ENCODE measurements at regions of chr5 and their contacts with region 1.

Region 1: DNA sequence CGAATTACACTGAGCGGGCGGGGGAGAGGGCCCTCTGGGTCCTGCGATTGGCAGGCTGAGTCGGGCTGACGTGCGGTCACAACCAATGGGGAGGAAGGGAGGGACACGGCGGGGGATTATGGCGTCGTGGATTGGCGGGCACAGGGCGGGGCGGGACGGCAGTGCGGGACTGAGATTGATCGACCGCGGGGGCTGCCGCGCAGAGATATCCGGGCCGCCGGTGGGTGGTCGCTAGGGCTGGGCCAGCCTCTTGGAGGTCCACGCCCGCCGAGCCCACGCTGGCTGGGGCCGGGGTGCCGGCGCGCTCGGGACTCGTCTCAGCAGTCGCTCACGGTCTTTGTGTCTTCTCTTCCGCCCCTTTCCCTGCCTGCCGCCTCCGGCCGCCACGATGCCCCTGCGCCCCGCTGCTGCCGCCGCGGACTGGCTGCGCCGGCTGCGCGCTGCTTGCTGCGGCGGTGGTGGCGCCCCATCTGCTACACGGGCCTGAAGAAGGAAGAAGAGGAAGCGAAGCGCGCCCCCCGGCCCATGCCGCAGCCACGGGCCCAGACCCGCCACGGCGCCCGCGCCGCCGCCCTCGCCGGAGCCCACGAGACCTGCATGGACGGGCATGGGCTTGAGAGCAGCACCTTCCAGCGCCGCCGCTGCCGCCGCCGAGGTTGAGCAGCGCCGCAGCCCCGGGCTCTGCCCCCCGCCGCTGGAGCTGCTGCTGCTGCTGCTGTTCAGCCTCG is at the start of gene RGMB:
- DNase-seq: peak; percentile 63 to 93 (median 88)
- ATAC-seq: peak; percentile 92
- H3K4me3 ChIP-seq: peak within 1 kb of the TSS; percentile 88
- H3K4me3 Mint-ChIP-seq: peak within 1 kb of the TSS; percentile 89 to 100 (median 98)
- H3K27ac ChIP-seq: peak within 1 kb of the TSS; percentile 61
- H3K27ac Mint-ChIP-seq: peak within 1 kb of the TSS; percentile 75 to 98 (median 95)
- H3K4me1 ChIP-seq: peaks cover 19 to 28% of the 10 kb centered on the region in 2 donors
- H3K4me1 Mint-ChIP-seq: peaks cover 44 to 72% (median 65%) of the 10 kb centered on the region in 7 donors
- H3K27me3 ChIP-seq: peaks cover 0 to 4% of the 10 kb centered on the region in 2 donors
- H3K27me3 Mint-ChIP-seq: peaks cover 0 to 83% (median 7%) of the 10 kb centered on the region in 5 donors
- total RNA-seq, gene RGMB: 0.41 to 22.4 (median 18.7) TPM

Region 2: GRCh38 chr5:96896806-96897205 is 1876.8 kb before region 1 on chr5:
- CTCF ChIA-PET with region 1: no interaction called
- POLR2A ChIA-PET with region 1: no interaction called
- intact Hi-C with region 1: loop called in 1 of 2 experiments (anchors 10 kb)
- DNase-seq: no peak
- ATAC-seq: peak; percentile 73
- H3K4me3 ChIP-seq: peak overlapping the region; percentile 36
- H3K4me3 Mint-ChIP-seq: peak overlapping the region; percentile 67 to 88 (median 79)
- H3K27ac ChIP-seq: peak overlapping the region; percentile 69
- H3K27ac Mint-ChIP-seq: peak overlapping the region; percentile 83 to 98 (median 94)
- H3K4me1 ChIP-seq: peaks cover 6 to 17% of the 10 kb centered on the region in 2 donors
- H3K4me1 Mint-ChIP-seq: peaks cover 26 to 71% (median 68%) of the 10 kb centered on the region in 7 donors
- H3K27me3 ChIP-seq: no peaks in the 10 kb centered on the region
- H3K27me3 Mint-ChIP-seq: no peaks in the 10 kb centered on the region

Region 3: DNA sequence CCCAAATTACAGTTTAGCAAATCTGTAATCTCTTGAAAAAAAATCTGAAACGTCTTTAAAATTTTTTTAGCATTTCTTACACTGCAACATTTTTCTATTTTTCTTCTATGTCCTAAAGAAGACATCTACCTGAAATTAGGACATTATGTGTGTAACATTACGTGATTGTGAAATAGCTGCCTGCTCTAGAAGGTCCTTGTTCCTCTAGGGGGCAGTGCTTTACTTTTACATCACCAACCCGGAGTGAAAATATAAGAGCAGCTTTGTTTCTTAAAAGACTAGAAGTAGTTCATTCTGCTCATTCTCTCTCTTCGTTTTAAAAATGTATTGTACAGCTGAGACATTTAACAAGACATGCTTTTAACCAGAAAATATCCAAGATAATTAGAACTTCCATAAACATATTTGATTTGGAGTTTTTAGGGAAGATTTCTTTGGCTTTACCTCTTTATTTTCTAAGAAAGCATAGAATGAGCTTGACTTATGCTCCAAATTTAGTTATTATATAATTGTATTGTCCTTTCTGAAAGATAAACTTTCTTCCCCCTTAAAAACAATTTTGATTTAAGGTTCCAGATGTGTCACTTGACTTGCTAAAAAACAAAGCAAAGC is 1542.5 kb before region 1 on chr5:
- CTCF ChIA-PET with region 1: no interaction called
- POLR2A ChIA-PET with region 1: no interaction called
- intact Hi-C with region 1: loop called in 1 of 2 experiments (anchors 1 kb)
- DNase-seq: peak in 7 of 9 donors; percentile 19 to 58 (median 43)
- ATAC-seq: peak; percentile 73
- H3K4me3 ChIP-seq: no peak overlapping the region
- H3K4me3 Mint-ChIP-seq: no peak overlapping the region
- H3K27ac ChIP-seq: no peak overlapping the region
- H3K27ac Mint-ChIP-seq: no peak overlapping the region
- H3K4me1 ChIP-seq: no peaks in the 10 kb centered on the region
- H3K4me1 Mint-ChIP-seq: peaks cover 0 to 5% (median 0%) of the 10 kb centered on the region in 7 donors
- H3K27me3 ChIP-seq: no peaks in the 10 kb centered on the region
- H3K27me3 Mint-ChIP-seq: peaks cover 0 to 13% (median 0%) of the 10 kb centered on the region in 5 donors

Region 4: DNA sequence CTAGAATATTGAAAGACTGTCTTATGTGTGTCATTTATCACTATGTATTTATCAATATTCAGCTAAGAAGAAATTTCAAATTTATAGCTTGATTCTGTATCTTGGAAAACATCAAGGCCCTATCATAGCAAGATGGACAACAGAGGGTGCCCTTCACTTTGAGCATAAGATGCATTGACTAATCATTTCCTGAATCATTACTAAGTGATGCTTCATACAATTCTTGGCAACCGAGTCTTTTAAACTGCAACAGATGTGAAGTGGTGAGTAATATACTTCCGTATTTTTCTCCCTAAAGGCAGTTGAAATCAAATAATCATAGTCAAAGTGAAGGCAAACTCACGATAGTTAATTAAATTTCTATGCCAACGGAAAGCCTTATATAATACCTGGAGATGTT is 318.7 kb before region 1 on chr5:
- CTCF ChIA-PET with region 1: interaction called, 3 read pairs
- POLR2A ChIA-PET with region 1: no interaction called
- intact Hi-C with region 1: loop called in 1 of 2 experiments (anchors 5 kb)
- DNase-seq: no peak
- ATAC-seq: no peak
- H3K4me3 ChIP-seq: no peak overlapping the region
- H3K4me3 Mint-ChIP-seq: no peak overlapping the region
- H3K27ac ChIP-seq: no peak overlapping the region
- H3K27ac Mint-ChIP-seq: no peak overlapping the region
- H3K4me1 ChIP-seq: no peaks in the 10 kb centered on the region
- H3K4me1 Mint-ChIP-seq: no peaks in the 10 kb centered on the region
- H3K27me3 ChIP-seq: no peaks in the 10 kb centered on the region
- H3K27me3 Mint-ChIP-seq: peaks cover 0 to 5% (median 0%) of the 10 kb centered on the region in 5 donors

Region 5: DNA sequence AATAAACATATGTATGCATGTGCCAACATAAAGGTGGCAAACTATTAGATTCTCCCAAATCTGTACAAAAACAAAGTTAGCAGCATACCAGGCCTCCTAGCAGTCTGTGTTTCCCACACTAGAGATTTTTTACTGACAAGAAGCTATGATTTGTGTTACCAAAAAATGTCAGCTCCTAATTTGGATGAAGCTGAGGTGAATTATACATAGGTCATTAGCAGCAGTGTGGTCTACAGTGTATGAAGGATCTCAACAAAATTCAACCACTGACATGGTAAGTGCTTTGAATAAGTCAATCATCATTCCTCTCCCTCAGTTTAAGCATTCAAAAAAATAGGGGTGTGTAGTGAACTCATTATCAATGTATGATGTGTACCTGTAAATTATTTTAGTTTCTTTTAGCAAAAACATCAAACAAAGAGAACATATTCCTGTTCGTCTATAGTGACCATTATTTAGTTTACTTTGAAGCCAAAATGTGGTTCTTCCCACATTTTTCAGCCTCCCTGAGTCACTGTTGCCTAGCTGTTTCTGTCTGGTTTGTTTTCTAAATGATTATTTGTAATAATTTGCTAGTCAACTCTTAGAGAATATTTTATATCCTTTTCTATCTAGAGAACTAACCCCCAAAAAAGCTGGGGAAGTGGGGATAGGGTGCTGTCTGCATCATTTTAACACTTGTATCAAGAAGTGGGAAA is 52.2 kb before region 1 on chr5:
- CTCF ChIA-PET with region 1: no interaction called
- POLR2A ChIA-PET with region 1: no interaction called
- intact Hi-C with region 1: no loop called
- DNase-seq: no peak
- ATAC-seq: no peak
- H3K4me3 ChIP-seq: no peak overlapping the region
- H3K4me3 Mint-ChIP-seq: no peak overlapping the region
- H3K27ac ChIP-seq: no peak overlapping the region
- H3K27ac Mint-ChIP-seq: no peak overlapping the region
- H3K4me1 ChIP-seq: no peaks in the 10 kb centered on the region
- H3K4me1 Mint-ChIP-seq: no peaks in the 10 kb centered on the region
- H3K27me3 ChIP-seq: no peaks in the 10 kb centered on the region
- H3K27me3 Mint-ChIP-seq: peaks cover 0 to 18% (median 15%) of the 10 kb centered on the region in 5 donors

Region 6: DNA sequence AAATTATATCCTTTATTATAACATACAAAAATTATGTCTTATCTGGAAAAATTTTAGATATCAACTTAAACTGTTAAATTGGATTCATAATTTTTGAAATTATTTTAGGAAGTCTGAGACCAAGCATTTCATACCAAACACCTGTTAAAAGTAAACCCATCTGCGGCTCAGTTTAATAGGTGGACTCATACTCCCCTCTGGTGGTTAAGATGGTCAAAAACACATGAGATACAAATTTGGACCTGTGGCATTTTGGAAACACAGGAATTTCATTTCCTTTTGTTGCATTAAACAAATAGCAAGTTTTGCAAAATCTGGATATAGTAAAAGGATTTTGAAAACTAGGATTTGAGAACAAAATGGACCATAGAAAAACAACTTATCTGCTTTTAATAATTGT is 53.5 kb after region 1 on chr5:
- CTCF ChIA-PET with region 1: no interaction called
- POLR2A ChIA-PET with region 1: no interaction called
- intact Hi-C with region 1: loop called in 1 of 2 experiments (anchors 1 kb)
- DNase-seq: peak in 5 of 9 donors; percentile 15 to 34 (median 22)
- ATAC-seq: no peak
- H3K4me3 ChIP-seq: no peak overlapping the region
- H3K4me3 Mint-ChIP-seq: no peak overlapping the region
- H3K27ac ChIP-seq: no peak overlapping the region
- H3K27ac Mint-ChIP-seq: no peak overlapping the region
- H3K4me1 ChIP-seq: no peaks in the 10 kb centered on the region
- H3K4me1 Mint-ChIP-seq: peaks cover 0 to 2% (median 0%) of the 10 kb centered on the region in 7 donors
- H3K27me3 ChIP-seq: no peaks in the 10 kb centered on the region
- H3K27me3 Mint-ChIP-seq: peaks cover 0 to 7% (median 0%) of the 10 kb centered on the region in 5 donors

Region 7: GRCh38 chr5:99032234-99033013 is 258.8 kb after region 1 on chr5:
- CTCF ChIA-PET with region 1: no interaction called
- POLR2A ChIA-PET with region 1: interaction called, 3 read pairs
- intact Hi-C with region 1: loop called (anchors 2 kb)
- DNase-seq: peak in 3 of 9 donors; percentile 22 to 43 (median 38)
- ATAC-seq: peak; percentile 49
- H3K4me3 ChIP-seq: peak overlapping the region; percentile 43
- H3K4me3 Mint-ChIP-seq: peak overlapping the region; percentile 71 to 97 (median 88)
- H3K27ac ChIP-seq: peak overlapping the region; percentile 70
- H3K27ac Mint-ChIP-seq: peak overlapping the region; percentile 85 to 98 (median 96)
- H3K4me1 ChIP-seq: peaks cover 30 to 31% of the 10 kb centered on the region in 2 donors
- H3K4me1 Mint-ChIP-seq: peaks cover 32 to 87% (median 79%) of the 10 kb centered on the region in 7 donors
- H3K27me3 ChIP-seq: no peaks in the 10 kb centered on the region
- H3K27me3 Mint-ChIP-seq: no peaks in the 10 kb centered on the region

Region 8: DNA sequence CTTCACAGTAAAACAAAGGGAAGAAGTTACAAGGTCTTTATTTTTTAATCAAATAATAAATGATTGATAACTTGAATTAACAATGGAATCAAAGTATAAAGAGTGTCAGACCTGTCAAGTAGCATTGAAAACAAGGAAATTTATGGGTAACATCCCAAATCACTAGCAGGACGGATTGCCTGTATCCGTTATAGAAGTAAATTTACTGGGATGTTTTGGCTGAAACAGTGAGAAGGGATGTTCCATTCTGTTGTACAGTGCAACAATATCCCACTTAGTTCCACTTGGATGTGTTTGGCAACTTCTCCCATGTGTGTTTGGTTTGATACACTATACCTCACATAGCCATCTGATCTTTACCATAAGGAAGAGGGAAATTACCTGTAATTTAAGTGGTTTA is 576.2 kb after region 1 on chr5:
- CTCF ChIA-PET with region 1: no interaction called
- POLR2A ChIA-PET with region 1: no interaction called
- intact Hi-C with region 1: no loop called
- DNase-seq: no peak
- ATAC-seq: no peak
- H3K4me3 ChIP-seq: no peak overlapping the region
- H3K4me3 Mint-ChIP-seq: no peak overlapping the region
- H3K27ac ChIP-seq: no peak overlapping the region
- H3K27ac Mint-ChIP-seq: no peak overlapping the region
- H3K4me1 ChIP-seq: no peaks in the 10 kb centered on the region
- H3K4me1 Mint-ChIP-seq: no peaks in the 10 kb centered on the region
- H3K27me3 ChIP-seq: no peaks in the 10 kb centered on the region
- H3K27me3 Mint-ChIP-seq: no peaks in the 10 kb centered on the region

Region 9: DNA sequence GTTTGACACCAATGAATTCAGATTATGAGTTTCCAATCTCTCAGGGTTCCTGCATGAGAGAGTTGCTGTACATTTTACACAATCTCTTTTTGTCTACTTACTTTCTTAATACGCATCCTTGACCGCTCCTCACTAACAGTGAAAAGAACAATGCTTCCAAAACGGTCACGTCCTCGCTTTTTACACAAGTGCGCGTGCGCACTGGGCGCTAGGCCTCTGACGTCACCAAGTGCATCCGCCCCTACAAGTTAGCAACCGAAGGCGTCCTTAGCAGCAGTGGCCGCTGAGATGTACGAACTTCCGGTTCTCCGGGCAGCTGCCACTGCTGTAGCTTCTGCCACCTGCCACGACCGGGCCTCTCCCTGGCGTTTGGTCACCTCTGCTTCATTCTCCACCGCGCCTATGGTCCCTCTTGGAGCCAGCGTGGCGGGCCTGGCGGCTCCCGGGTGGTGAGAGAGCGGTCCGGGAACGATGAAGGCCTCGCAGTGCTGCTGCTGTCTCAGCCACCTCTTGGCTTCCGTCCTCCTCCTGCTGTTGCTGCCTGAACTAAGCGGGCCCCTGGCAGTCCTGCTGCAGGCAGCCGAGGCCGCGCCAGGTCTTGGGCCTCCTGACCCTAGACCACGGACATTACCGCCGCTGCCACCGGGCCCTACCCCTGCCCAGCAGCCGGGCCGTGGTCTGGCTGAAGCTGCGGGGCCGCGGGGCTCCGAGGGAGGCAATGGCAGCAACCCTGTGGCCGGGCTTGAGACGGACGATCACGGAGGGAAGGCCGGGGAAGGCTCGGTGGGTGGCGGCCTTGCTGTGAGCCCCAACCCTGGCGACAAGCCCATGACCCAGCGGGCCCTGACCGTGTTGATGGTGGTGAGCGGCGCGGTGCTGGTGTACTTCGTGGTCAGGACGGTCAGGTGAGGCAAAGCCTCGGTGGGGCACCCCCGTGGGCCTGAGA is 1761.7 kb after region 1 on chr5 and contains the start of gene FAM174A:
- CTCF ChIA-PET with region 1: no interaction called
- POLR2A ChIA-PET with region 1: no interaction called
- intact Hi-C with region 1: loop called (anchors 1 to 10 kb)
- DNase-seq: peak; percentile 88 to 96 (median 95)
- ATAC-seq: peak; percentile 91
- H3K4me3 ChIP-seq: peak within 1 kb of the TSS; percentile 88
- H3K4me3 Mint-ChIP-seq: peak within 1 kb of the TSS; percentile 84 to 100 (median 96)
- H3K27ac ChIP-seq: peak within 1 kb of the TSS; percentile 82
- H3K27ac Mint-ChIP-seq: peak within 1 kb of the TSS; percentile 81 to 100 (median 97)
- H3K4me1 ChIP-seq: peaks cover 10 to 11% of the 10 kb centered on the region in 2 donors
- H3K4me1 Mint-ChIP-seq: peaks cover 15 to 51% (median 33%) of the 10 kb centered on the region in 7 donors
- H3K27me3 ChIP-seq: no peaks in the 10 kb centered on the region
- H3K27me3 Mint-ChIP-seq: peaks cover 0 to 15% (median 0%) of the 10 kb centered on the region in 5 donors
- total RNA-seq, gene FAM174A: 4.6 to 10.7 (median 6.0) TPM

Measured in naive thymus-derived CD4-positive, alpha-beta T cell (primary cell).